ENCODE measurements at regions of chr1 and their contacts with region 1.

Region 1: GRCh38 chr1:106038260-106038659 is 1018.2 kb upstream of the PRMT6 start:
- DNase-seq: no peak

Region 2: DNA sequence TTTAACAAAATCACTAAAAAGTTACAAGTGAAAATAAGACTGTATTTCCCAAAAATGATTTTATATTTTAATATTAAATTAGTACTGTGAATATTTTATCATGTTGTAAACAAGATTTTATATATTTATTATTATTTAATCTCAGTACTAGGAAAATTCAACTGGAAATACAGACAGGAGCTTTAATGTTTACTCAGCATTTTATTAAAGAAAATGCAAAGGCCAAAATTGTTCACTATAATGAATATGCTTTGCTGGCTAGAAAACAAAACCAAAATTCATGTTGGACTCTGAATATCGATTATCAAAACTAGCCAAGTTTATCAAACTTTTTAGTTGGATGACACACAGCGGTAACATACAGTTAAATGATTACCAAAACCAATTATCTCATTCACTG is 1506.3 kb before region 1 on chr1:
- intact Hi-C with region 1: loop called in 1 of 2 experiments (anchors 10 kb)
- DNase-seq: no peak

Measured in posterior vena cava (tissue), 2 donors.